Activated CD4-positive, alpha-beta memory T cell treated with anti-CD3 and anti-CD28 coated beads for 36 hours (primary cell): ENCODE measurements at regions of chr4 and their contacts with region 1.

Region 1: DNA sequence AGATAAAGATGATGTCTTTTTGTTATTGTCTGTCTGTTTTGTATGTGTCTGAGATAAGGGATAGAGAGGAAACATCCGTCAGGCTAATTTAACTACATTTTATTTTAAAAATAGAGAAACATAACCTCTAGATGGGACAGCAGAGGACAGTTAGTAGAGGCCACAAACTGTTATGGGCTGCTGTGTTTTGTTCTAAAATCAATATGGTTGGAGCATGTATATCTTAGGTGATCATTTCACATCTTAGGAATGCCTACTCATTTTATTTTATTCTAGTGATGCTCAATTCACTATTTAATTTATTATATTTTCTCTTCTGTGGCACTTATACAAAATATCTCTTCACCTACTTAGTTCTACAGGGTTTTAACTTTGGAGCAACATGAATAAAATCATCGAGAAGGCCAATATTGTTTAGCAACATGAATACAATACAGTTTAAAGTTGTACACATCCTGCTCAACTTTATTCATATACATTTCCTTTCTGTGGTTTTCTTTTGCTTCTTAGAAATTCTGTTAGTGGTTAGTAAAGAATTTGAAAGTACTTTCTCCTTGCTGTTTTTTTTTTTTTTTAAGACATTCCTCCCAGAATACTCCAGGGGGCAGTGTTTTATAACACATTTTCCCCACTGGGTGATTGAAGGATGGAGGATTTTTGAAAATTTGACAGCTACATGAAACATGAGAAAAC is 392.9 kb downstream of the UNC5C start:
- DNase-seq: no peak
- H3K4me3 Mint-ChIP-seq: no peak overlapping the region
- H3K27ac Mint-ChIP-seq: no peak overlapping the region
- H3K4me1 Mint-ChIP-seq: peaks cover 14% of the 10 kb centered on the region
- H3K27me3 Mint-ChIP-seq: no peaks in the 10 kb centered on the region

Region 2: GRCh38 chr4:95510145-95510544 is 354.2 kb after region 1 on chr4:
- CTCF ChIA-PET with region 1: no interaction called
- POLR2A ChIA-PET with region 1: no interaction called
- intact Hi-C with region 1: loop called (anchors 5 kb)
- DNase-seq: no peak
- H3K4me3 Mint-ChIP-seq: no peak overlapping the region
- H3K27ac Mint-ChIP-seq: no peak overlapping the region
- H3K4me1 Mint-ChIP-seq: peaks cover 5% of the 10 kb centered on the region
- H3K27me3 Mint-ChIP-seq: peaks cover 3% of the 10 kb centered on the region

Region 3: DNA sequence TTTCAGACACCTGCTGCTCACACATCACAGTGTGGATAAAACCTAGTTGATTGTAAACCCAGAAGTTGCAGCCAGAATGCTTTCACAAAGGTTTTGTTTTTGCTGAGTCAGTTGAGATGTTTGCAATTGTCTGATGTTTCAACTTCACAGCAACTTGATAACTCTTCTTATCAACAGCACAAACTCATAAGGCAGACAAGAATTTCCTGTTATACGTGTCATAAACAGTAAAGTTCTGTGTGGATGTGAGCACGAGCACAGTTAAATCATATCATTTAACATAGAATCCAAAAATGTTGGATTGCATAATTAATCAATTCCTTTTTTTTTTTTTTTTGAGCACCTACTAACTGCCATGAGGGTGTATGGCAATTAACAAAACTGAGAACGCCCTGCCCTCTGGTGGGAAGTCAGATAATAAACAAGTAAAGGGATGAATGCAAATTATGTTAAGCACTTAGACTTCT is 1196.2 kb after region 1 on chr4:
- CTCF ChIA-PET with region 1: interaction called, 3 read pairs
- POLR2A ChIA-PET with region 1: no interaction called
- intact Hi-C with region 1: loop called (anchors 5 kb)
- DNase-seq: no peak
- H3K4me3 Mint-ChIP-seq: no peak overlapping the region
- H3K27ac Mint-ChIP-seq: no peak overlapping the region
- H3K4me1 Mint-ChIP-seq: no peaks in the 10 kb centered on the region
- H3K27me3 Mint-ChIP-seq: no peaks in the 10 kb centered on the region